ENCODE measurements at regions of chr2 and their contacts with region 1.

Region 1: GRCh38 chr2:689877-690510 is 12.8 kb upstream of the TMEM18 start:
- DNase-seq: no peak
- H3K4me3 ChIP-seq: no peak overlapping the region
- H3K27ac ChIP-seq: no peak overlapping the region
- H3K4me1 ChIP-seq: no peaks in the 10 kb centered on the region
- H3K27me3 ChIP-seq: no peaks in the 10 kb centered on the region; a peak in 1 of 7 replicates
- CTCF ChIP-seq: no peak
- EP300 ChIP-seq: no peak
- POLR2A ChIP-seq: no peak
- RAD21 ChIP-seq: no peak

Region 2: GRCh38 chr2:620471-621302 is 69.3 kb before region 1 on chr2:
- CTCF ChIA-PET with region 1: no interaction called
- POLR2A ChIA-PET with region 1: no interaction called
- DNase-seq: peak in 1 of 2 experiments; percentile 43
- H3K4me3 ChIP-seq: no peak overlapping the region
- H3K27ac ChIP-seq: no peak overlapping the region
- H3K4me1 ChIP-seq: no peaks in the 10 kb centered on the region
- H3K27me3 ChIP-seq: no peaks in the 10 kb centered on the region
- CTCF ChIP-seq: no peak
- EP300 ChIP-seq: no peak
- POLR2A ChIP-seq: no peak
- RAD21 ChIP-seq: no peak

Region 3: DNA sequence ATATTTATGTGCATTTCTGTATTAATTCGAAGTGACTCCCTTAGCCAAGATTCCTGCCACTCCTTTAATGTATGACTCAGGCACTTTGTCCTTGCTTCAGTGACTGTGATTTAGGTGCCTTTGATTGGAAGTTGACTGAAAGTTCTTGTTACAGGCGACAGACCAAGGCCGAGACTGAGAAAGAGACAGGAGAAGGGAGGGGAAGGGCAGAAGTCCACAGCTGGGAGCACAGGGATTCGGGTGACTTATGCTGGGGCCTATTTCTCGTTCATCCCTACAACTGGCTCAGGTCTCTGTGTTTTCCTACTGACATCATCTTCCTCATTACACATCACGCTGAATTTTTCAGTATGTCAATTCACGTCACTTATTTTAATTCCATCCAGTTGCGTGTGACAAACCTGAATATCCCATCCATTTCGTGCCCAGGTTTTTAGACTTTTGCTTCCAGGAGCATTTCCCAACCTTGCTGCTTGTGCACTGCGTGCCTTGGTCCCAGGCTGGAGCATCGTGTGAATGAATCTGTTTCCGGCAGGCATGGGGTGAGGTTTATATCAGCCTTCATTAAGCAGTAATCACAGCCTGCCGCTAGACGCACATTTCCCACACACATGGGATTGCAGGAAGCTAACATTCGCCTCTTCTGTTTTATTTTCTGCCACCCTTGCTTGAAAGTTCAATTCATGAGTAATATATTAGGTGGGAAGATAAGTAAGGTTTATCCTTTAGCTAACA is 55.2 kb before region 1 on chr2:
- CTCF ChIA-PET with region 1: no interaction called
- POLR2A ChIA-PET with region 1: no interaction called
- DNase-seq: peak in 1 of 2 experiments; percentile 26
- H3K4me3 ChIP-seq: no peak overlapping the region
- H3K27ac ChIP-seq: no peak overlapping the region
- H3K4me1 ChIP-seq: no peaks in the 10 kb centered on the region
- H3K27me3 ChIP-seq: peaks cover 8 to 13% (median 12%) of the 10 kb centered on the region in 4 experiments
- CTCF ChIP-seq: no peak
- EP300 ChIP-seq: no peak
- POLR2A ChIP-seq: no peak
- RAD21 ChIP-seq: no peak

Region 4: DNA sequence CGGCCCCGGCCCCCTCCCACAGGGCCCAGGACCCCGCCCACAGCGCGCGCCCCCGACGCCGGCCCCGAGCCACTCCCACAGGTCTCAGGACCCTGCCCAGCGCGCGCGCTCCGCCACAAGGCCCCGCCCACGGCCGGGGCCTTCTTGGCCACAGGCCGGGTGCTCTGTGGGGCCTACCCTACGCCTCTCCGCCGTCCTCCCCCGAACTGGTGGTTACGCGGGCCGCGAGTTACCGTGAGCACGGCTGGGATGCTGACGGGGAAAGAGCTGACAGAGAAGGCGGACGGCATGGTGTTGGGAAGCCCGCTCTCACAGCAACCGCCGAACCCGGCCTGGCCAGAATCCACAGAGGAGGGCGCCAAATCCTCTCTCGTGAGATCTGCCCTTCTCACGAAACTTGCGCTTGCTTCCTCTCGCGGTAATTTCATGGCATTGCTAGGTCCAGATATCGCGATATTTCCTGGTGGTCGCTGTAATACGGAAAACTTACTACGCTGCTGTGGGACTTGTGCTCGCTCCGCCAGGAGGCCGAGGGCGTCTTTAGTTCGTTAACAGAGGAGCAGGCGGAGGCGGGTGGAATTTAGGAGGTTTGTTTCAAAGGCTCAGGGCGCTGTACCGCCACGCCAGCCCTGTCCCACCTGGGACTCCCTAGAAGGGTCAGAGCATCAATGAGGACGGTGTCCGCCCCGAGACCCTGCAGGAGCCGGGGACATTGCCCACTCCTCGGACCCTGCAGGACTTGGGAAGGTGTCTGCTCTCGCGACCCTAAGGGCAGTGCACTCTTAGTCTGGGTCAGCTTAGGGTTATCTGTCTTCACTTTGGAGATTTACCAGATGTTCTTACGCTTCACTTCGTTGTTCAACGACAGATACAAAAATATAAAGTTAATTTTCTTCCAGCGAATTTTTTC is 12.7 kb before region 1 on chr2 and contains the start of gene TMEM18:
- CTCF ChIA-PET with region 1: interaction called, 3 read pairs
- POLR2A ChIA-PET with region 1: interaction called, 13 read pairs
- DNase-seq: peak; percentile 88 to 97
- H3K4me3 ChIP-seq: peak within 1 kb of the TSS; percentile 79 to 93 (median 85)
- H3K27ac ChIP-seq: peak within 1 kb of the TSS; percentile 98
- H3K4me1 ChIP-seq: peaks cover 2 to 14% (median 8%) of the 10 kb centered on the region in 4 experiments
- H3K27me3 ChIP-seq: no peaks in the 10 kb centered on the region
- CTCF ChIP-seq: peak in 2 of 3 experiments; percentile 6 to 37; a peak in 2 of 4 replicates
- EP300 ChIP-seq: no peak
- POLR2A ChIP-seq: peak; percentile 88 to 94
- RAD21 ChIP-seq: peak; percentile 11 to 16; a peak in 2 of 4 replicates
- total RNA-seq, gene TMEM18: 22.3 and 27.1 TPM in 2 replicates

Region 5: GRCh38 chr2:833180-833579 is 143.2 kb after region 1 on chr2:
- CTCF ChIA-PET with region 1: no interaction called
- POLR2A ChIA-PET with region 1: no interaction called
- DNase-seq: no peak
- H3K4me3 ChIP-seq: no peak overlapping the region
- H3K27ac ChIP-seq: no peak overlapping the region
- H3K4me1 ChIP-seq: peaks cover 0 to 16% (median 6%) of the 10 kb centered on the region in 4 experiments; a peak in 6 of 7 replicates
- H3K27me3 ChIP-seq: peaks cover 0 to 5% (median 3%) of the 10 kb centered on the region in 4 experiments; a peak in 4 of 7 replicates
- CTCF ChIP-seq: no peak
- EP300 ChIP-seq: no peak
- POLR2A ChIP-seq: no peak
- RAD21 ChIP-seq: no peak

Measured in H1 (cell line).